ENCODE measurements at regions of chr11 and their contacts with region 1.

Region 1: GRCh38 chr11:74611369-74611861 is 19.0 kb downstream of the POLD3 start:
- DNase-seq: peak in 1 of 2 experiments; percentile 75
- H3K4me3 ChIP-seq: no peak overlapping the region
- H3K27ac ChIP-seq: peak overlapping the region; percentile 38
- H3K4me1 ChIP-seq: peaks cover 7% of the 10 kb centered on the region; the same call in 1 of the 2 replicates
- H3K27me3 ChIP-seq: no peaks in the 10 kb centered on the region
- CTCF ChIP-seq: peak; percentile 69

Region 2: GRCh38 chr11:74366576-74366975 is 244.8 kb before region 1 on chr11:
- CTCF ChIA-PET with region 1: no interaction called
- POLR2A ChIA-PET with region 1: no interaction called
- intact Hi-C with region 1: no loop called
- DNase-seq: no peak
- H3K4me3 ChIP-seq: no peak overlapping the region
- H3K27ac ChIP-seq: no peak overlapping the region
- H3K4me1 ChIP-seq: peaks cover 10% of the 10 kb centered on the region
- H3K27me3 ChIP-seq: no peaks in the 10 kb centered on the region
- CTCF ChIP-seq: no peak

Region 3: GRCh38 chr11:74532501-74533246 is 78.7 kb before region 1 on chr11:
- CTCF ChIA-PET with region 1: no interaction called
- POLR2A ChIA-PET with region 1: no interaction called
- intact Hi-C with region 1: no loop called
- DNase-seq: peak; percentile 64 to 95
- H3K4me3 ChIP-seq: no peak overlapping the region
- H3K27ac ChIP-seq: peak overlapping the region; percentile 45
- H3K4me1 ChIP-seq: peaks cover 53% of the 10 kb centered on the region
- H3K27me3 ChIP-seq: no peaks in the 10 kb centered on the region
- CTCF ChIP-seq: no peak

Region 4: DNA sequence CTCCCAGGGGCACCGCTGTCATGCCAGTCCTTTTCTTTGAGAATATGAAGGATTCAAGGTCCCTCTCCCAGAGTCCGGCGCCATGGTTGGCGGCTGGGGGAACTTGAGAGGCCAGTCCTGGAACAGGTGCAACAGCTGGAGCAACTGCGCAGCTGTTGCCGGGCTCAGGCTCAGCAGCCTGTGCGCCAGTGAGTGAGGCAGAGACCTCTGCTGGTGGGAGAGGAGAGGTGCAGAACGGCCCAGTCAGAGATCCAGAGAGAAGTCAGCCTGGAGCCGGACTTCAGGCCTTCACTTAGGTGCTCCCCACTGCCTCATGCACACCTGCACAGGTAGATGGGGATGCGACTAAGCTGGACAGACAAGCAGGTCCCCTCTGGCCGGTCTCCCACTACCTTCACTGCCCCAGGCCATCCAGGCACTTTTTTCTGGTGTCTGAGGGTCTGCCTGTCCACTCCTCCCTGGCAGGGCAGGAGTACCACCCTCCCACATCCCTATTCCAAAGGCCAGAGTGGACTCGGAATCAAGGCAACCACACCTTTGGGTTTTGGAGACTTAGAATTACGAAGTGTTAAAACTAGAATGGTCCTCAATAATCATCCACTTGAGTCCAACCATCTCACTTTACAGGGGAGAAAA is 115.2 kb after region 1 on chr11:
- CTCF ChIA-PET with region 1: interaction called, 4 read pairs
- POLR2A ChIA-PET with region 1: no interaction called
- intact Hi-C with region 1: loop called (anchors 1 kb)
- DNase-seq: peak; percentile 67 to 75
- H3K4me3 ChIP-seq: no peak overlapping the region
- H3K27ac ChIP-seq: no peak overlapping the region
- H3K4me1 ChIP-seq: no peaks in the 10 kb centered on the region
- H3K27me3 ChIP-seq: peaks cover 22% of the 10 kb centered on the region
- CTCF ChIP-seq: peak; percentile 96

Region 5: DNA sequence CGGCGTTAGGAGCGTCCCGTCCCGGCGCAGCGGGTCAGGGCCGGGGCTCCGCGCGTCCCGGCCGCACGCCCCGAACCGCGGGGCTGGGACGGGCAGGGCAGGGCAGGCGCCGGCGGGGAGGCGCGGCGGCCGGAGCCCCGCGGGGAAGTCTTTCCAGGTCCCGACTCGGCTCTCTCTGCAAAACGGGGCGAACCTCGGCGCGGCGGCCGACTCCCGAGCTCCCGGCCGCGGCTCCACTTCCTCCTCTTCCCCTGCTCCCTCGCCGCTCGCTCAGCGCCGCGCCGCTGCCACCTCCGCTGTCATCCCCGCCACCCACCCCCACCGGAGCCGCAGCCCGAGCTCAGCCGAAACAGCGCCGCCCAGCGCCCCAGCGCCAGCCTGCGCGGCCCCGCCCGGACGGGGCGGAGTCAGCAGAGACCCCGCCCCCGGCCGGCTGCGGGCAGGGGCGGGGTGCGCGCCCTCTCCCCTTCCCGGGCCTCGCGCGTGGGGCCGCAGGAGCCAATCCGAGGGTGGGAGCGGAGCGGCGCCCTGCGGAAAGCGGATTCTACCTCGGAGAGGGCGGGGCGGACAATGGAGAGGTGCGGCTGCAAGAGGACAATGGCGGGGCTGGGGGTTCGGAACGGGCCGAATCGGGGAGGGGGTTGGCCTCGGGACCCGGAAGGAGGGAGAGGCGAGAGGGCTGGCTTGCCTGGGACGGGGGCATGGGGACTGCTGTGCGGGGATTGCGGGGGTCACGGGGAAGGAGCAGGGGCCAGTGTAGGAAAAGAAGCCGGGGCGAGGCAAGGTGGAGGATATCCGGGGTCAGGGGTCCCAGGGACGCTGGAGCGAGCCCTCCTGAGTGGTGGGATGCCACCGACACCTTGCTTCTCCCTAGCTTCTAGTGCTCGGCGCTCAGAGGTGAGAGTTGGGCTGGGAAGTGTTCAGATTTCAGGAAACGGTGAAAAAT is 914.5 kb after region 1 on chr11 and contains the start of gene GDPD5:
- CTCF ChIA-PET with region 1: no interaction called
- POLR2A ChIA-PET with region 1: no interaction called
- intact Hi-C with region 1: no loop called
- DNase-seq: peak; percentile 63 to 91
- H3K4me3 ChIP-seq: peak within 1 kb of the TSS; percentile 58
- H3K27ac ChIP-seq: no peak within 1 kb of the TSS
- H3K4me1 ChIP-seq: peaks cover 12% of the 10 kb centered on the region; the same call in 1 of the 2 replicates
- H3K27me3 ChIP-seq: peaks cover 15% of the 10 kb centered on the region; the same call in 1 of the 2 replicates
- CTCF ChIP-seq: 0 out of 2 replicates have a peak, but pooled peaks have one; percentile 36
- total RNA-seq, gene GDPD5: 7.9 and 9.9 TPM in 2 replicates